Right ventricle myocardium superior (tissue), 1 donor: ENCODE measurements at regions of chr5 and their contacts with region 1.

Region 1: DNA sequence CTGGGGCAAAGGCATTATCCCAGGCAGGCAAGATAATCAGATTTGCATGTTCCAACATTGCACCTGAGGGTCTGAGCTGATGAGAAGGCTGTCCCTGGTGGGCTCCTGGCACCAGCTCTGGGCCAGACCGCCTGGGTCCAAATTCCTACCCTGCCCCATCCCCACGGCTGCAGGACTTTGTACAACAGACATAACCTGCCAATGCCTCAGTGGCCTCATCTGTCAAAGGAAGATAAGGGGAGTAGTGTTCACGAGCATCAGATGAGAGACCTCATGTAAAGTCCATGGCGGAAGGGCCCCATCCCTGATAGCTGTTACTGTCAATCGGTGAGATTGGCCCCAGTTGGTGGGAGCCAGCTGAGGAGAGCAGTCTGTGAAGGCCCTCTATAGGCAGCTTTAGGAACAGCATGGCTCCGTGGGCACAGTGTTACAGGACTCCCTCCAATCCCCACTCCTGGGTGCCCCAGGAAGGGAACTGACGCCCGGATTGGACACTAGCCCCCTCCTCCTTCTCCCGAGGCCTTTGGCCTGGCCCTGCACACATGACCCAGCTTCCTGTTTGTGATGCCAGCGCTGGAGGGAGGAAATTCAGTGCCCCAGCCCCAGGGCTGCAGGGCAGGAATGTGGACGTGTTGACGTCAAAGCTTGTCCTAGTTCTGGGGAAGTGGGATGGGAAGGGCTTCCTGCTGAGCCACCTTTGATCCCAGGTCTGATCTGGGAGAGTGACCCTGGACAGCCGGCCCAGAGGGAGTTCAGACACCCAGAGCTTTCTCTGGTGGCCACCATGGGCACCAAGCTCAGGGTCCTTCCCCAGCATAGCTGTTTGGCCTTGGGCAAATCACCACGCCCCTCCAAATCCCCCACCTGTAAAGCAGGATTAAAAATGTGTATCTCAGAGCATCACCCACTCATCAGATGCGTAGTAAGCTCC is 56.2 kb downstream of the DUSP1 start:
- DNase-seq: peak; percentile 88
- ATAC-seq: peak; percentile 75

Region 2: DNA sequence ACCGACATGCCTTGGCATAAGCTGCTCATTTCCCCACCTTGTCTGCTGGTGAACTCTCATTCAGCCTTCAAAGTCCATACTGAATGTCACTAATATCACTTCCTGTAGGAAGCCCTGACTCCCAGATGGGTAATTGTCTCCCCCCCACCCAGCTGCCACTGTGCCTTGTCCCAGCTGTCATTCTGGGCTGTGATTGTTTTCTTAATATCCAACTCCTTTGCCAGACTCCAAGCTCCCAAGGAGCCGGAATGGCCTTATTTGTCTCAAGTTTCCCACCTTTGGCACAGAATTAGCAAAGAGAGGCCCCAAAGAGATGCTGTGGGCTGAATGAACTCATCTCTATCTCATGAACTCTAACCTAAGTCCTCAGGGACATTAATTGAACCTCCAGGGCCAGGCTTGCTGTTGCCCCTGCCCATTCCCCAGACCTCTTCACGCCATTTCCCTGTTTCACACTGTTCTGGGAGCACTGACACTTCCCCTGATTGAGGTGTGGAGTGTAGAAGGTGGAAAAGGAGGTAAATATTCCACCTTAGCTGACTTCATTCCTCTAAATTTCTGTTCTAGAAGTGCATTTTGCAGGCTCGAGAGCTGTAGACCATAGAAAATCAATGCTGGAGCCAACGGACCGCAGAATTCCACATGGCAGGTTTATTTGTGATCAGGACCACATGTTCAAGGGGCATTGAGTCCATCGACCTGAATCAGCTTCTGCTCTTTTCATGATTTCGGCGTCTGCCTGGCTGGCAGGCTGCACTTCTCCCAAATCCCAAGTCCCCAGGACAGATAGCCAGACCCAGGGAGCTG is 255.6 kb before region 1 on chr5:
- intact Hi-C with region 1: no loop called
- DNase-seq: no peak
- ATAC-seq: no peak

Region 3: GRCh38 chr5:172524573-172525021 is 190.2 kb before region 1 on chr5:
- intact Hi-C with region 1: no loop called
- DNase-seq: no peak
- ATAC-seq: no peak

Region 4: GRCh38 chr5:172659909-172660628 is 54.7 kb before region 1 on chr5:
- intact Hi-C with region 1: no loop called
- DNase-seq: peak; percentile 94
- ATAC-seq: peak; percentile 85

Region 5: DNA sequence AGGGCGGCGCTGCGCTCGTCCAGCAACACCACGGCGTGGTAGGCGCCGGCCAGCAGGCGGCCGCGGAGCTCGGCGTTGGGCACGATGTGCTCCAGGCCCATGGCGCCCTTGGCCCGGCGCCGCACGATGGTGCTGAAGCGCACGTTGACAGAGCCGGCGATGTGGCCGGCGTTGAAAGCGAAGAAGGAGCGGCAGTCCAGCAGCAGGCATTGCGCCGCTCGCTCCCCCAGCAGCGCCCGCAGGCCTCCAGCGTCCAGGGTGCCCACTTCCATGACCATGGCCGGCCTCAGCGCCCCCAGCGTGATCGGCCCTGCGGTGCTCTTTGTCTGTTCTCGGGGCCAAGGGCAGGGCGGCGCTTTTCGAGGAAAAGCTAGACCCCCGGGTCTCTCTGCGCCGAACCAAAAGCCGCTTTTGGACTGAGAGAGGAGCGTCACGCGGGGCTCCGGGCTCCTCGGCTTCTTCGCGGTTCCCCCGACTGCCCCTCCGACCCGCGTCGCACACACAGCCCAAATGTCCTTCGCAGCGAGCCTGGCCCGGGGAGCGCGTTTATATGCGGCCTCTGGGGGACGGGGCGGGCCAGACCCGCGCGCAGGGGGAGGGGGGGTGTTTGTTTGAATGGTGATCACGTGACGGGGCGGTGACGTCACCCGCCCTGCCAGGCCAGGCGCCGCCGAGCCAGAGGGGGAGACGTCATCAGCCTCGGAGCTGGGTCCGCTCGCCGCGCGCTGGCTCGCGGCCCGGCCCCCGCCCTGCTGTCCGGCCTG is 56.1 kb after region 1 on chr5 and contains the start of gene DUSP1:
- intact Hi-C with region 1: loop called (anchors 2 kb)
- DNase-seq: peak; percentile 100
- ATAC-seq: peak; percentile 73
- total RNA-seq, gene DUSP1: 122 TPM

Region 6: DNA sequence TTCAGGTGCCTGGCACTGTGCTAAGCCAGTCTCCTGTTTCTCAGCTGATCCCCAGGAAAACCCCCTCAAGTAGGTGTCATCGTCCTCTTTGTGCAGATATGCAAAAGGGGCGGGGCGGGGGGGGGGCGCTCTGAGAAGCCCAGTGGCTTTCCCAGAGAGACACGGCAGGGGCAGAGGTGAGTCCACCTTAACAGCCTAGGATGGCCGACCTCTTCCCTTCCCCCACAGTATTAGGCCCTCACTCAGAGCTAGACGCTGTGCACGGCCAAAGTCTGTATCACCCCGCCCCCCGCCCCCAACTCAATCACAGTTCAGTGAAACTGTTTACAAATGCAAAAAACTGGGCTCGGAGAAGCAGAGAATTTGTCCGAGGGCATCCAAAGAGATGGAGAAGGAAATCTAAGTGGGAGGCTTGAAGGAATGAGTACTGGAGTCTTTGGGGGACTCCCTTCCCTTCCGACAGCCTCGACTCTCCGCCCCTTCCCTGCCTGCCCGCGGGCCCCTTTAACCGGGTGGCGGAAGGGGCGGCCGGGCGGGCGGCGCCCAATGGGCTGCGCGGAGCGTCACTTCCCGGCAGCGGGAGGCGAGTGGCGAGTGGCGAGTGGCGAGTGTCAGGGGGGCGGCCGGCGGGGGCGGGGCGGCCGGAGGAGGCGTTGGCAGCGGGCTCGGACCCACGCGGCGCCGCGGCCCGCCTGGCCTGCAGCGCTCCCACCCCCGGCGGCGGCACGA is 119.1 kb after region 1 on chr5 and contains the start of gene ERGIC1:
- intact Hi-C with region 1: loop called (anchors 10 kb)
- DNase-seq: peak; percentile 93
- ATAC-seq: peak; percentile 94
- total RNA-seq, gene ERGIC1: 75.5 TPM